Activated CD4-positive, alpha-beta T cell treated with anti-CD3 and anti-CD28 coated beads for 36 hours (primary cell): ENCODE measurements at regions of chr10 and their contacts with region 1.

Region 1: GRCh38 chr10:103643381-103643780 is 149.9 kb downstream of the NEURL1 start:
- DNase-seq: no peak
- ATAC-seq: no peak
- H3K4me3 Mint-ChIP-seq: no peak overlapping the region
- H3K27ac Mint-ChIP-seq: no peak overlapping the region
- H3K4me1 Mint-ChIP-seq: no peaks in the 10 kb centered on the region
- H3K27me3 Mint-ChIP-seq: no peaks in the 10 kb centered on the region

Region 2: GRCh38 chr10:103605359-103606095 is 37.9 kb before region 1 on chr10:
- CTCF ChIA-PET with region 1: interaction called, 3 read pairs
- POLR2A ChIA-PET with region 1: no interaction called
- intact Hi-C with region 1: loop called in 1 of 2 experiments (anchors 2 kb)
- DNase-seq: peak; percentile 66
- ATAC-seq: peak; percentile 53
- H3K4me3 Mint-ChIP-seq: no peak overlapping the region
- H3K27ac Mint-ChIP-seq: no peak overlapping the region
- H3K4me1 Mint-ChIP-seq: no peaks in the 10 kb centered on the region
- H3K27me3 Mint-ChIP-seq: no peaks in the 10 kb centered on the region